Motor neuron (in vitro differentiated cells): ENCODE measurements at regions of chr19 and their contacts with region 1.

Region 1: DNA sequence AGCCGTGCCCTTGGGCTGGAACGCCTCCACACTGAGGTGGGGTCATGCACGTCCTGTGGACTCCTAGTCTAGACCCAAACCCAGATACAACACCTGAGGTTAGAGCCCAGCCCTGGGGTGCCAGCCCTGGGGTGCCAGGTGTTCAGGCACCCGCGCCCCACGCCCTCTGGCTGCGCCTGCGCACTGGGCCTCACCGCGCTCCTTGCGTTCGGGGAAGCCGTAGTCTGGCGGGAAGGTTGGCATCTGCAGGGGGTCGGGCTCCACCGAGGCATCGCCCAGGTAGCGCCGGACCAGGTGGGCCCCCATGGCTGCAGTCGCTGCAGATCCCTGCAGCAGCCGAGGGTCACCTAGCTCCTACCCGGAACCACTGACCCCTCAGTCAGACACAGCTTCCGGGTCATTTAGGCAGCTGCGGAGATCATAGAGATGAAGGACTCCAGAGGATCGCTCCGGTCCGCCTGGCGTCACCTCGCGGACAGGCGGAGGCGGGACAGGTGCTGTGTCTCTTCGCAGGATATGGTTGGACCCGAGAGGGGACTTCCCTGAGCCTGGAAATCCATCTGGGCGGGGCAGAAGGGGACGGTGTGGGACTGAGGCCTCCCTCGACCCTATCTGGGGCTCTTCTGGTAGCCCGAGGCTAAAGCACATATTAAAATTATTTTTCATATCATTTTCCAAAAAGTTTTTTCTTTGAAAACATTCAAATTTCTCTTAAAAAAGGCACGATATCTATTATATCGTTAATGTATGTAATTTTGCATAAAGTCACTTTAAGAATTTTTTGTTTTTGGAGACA is at the start of gene NDUFB7:
- ATAC-seq: peak; percentile 88 to 97 (median 92)
- H3K4me3 ChIP-seq: peak within 1 kb of the TSS; percentile 72 to 98 (median 81)
- H3K27ac ChIP-seq: peak within 1 kb of the TSS; percentile 77 to 82
- H3K4me1 ChIP-seq: peaks cover 9 to 10% of the 10 kb centered on the region in 2 donors
- total RNA-seq, gene NDUFB7: 232 to 333 (median 277) TPM

Region 2: DNA sequence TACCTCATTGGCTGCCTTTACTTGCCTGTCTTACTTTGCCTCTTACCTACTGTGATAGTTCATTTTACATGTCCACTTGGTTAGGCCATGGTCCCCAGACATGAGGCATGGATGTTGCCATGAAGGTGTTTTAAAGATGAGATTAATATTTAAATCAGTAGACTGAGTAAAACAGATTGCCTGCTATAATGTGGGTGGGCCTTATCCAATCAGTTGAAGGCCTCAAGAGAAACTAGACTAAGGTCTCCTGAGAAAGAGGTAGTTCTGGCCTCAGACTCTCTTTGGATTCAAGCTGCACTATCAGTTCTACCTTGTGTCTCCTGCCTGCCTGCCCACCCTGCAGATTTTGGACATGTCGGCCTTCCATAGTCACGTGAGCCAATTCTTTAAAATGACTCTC is 76.6 kb after region 1 on chr19:
- in situ Hi-C with region 1: no loop called
- ATAC-seq: no peak
- H3K4me3 ChIP-seq: no peak overlapping the region
- H3K27ac ChIP-seq: no peak overlapping the region
- H3K4me1 ChIP-seq: no peaks in the 10 kb centered on the region

Region 3: GRCh38 chr19:14689598-14690503 is 118.0 kb after region 1 on chr19 and contains the start of gene ZNF333:
- in situ Hi-C with region 1: loop called in 1 of 9 experiments (anchors 5 kb)
- ATAC-seq: peak; percentile 94 to 98 (median 97)
- H3K4me3 ChIP-seq: peak within 1 kb of the TSS; percentile 48 to 91 (median 61)
- H3K27ac ChIP-seq: peak within 1 kb of the TSS; percentile 97 to 98
- H3K4me1 ChIP-seq: peaks cover 6 to 12% of the 10 kb centered on the region in 2 donors
- total RNA-seq, gene ZNF333: 9.5 to 27.8 (median 19.8) TPM